IMR-90 (cell line): ENCODE measurements at regions of chr14 and their contacts with region 1.

Region 1: GRCh38 chr14:95774265-95775160 is 60.6 kb upstream of the TCL1A start:
- DNase-seq: peak; percentile 44
- ATAC-seq: peak; percentile 82
- H3K4me3 ChIP-seq: no peak overlapping the region
- H3K27ac ChIP-seq: no peak overlapping the region
- H3K4me1 ChIP-seq: no peaks in the 10 kb centered on the region
- H3K27me3 ChIP-seq: no peaks in the 10 kb centered on the region
- CTCF ChIP-seq: peak; percentile 76
- POLR2A ChIP-seq: no peak
- RAD21 ChIP-seq: peak; percentile 57

Region 2: GRCh38 chr14:94689218-94689984 is 1085.1 kb before region 1 on chr14:
- CTCF ChIA-PET with region 1: no interaction called
- POLR2A ChIA-PET with region 1: no interaction called
- dilution Hi-C with region 1: no loop called
- in situ Hi-C with region 1: no loop called
- intact Hi-C with region 1: loop called (anchors 10 kb)
- DNase-seq: peak; percentile 22
- ATAC-seq: peak; percentile 100
- H3K4me3 ChIP-seq: no peak overlapping the region; the same call in 1 of the 2 replicates
- H3K27ac ChIP-seq: no peak overlapping the region
- H3K4me1 ChIP-seq: peaks cover 2% of the 10 kb centered on the region; the same call in 1 of the 2 replicates
- H3K27me3 ChIP-seq: no peaks in the 10 kb centered on the region; the same call in 1 of the 2 replicates
- CTCF ChIP-seq: peak; percentile 92
- POLR2A ChIP-seq: no peak
- RAD21 ChIP-seq: peak; percentile 90

Region 3: GRCh38 chr14:95431199-95432143 is 343.0 kb before region 1 on chr14:
- CTCF ChIA-PET with region 1: interaction called, 5 read pairs
- POLR2A ChIA-PET with region 1: no interaction called
- dilution Hi-C with region 1: no loop called
- in situ Hi-C with region 1: loop called (anchors 25 kb)
- intact Hi-C with region 1: loop called (anchors 1 kb)
- DNase-seq: peak; percentile 17
- ATAC-seq: no peak
- H3K4me3 ChIP-seq: no peak overlapping the region
- H3K27ac ChIP-seq: no peak overlapping the region
- H3K4me1 ChIP-seq: no peaks in the 10 kb centered on the region
- H3K27me3 ChIP-seq: no peaks in the 10 kb centered on the region
- CTCF ChIP-seq: peak; percentile 51
- POLR2A ChIP-seq: no peak
- RAD21 ChIP-seq: peak; percentile 37; the same call in 1 of the 2 replicates

Region 4: GRCh38 chr14:95442633-95443021 is 331.9 kb before region 1 on chr14:
- CTCF ChIA-PET with region 1: no interaction called
- POLR2A ChIA-PET with region 1: no interaction called
- dilution Hi-C with region 1: no loop called
- in situ Hi-C with region 1: loop called (anchors 25 kb)
- intact Hi-C with region 1: loop called (anchors 1 kb)
- DNase-seq: peak; percentile 76
- ATAC-seq: peak; percentile 95
- H3K4me3 ChIP-seq: no peak overlapping the region
- H3K27ac ChIP-seq: no peak overlapping the region
- H3K4me1 ChIP-seq: peaks cover 5% of the 10 kb centered on the region
- H3K27me3 ChIP-seq: no peaks in the 10 kb centered on the region
- CTCF ChIP-seq: peak; percentile 83
- POLR2A ChIP-seq: no peak
- RAD21 ChIP-seq: peak; percentile 95

Region 5: DNA sequence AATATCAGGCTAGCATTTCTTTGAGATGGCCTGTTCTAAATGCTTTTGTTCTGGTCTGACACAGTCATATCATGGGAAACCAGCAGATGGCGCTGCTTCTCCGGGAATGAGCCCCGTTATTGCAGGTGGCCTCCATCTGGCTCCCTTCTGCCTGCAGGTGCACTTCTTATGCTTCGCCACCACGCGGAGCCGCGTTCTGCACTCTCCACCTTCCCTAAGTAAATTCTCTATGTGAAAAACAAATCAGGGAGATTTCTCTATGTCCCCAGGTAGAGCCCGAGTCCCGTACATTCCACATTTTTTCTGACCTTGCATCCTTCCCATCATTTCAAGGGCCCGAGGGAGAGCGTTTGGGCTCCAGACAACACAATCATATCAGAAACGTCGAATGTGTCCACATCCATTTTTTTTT is 213.5 kb before region 1 on chr14:
- CTCF ChIA-PET with region 1: interaction called, 8 read pairs
- POLR2A ChIA-PET with region 1: no interaction called
- dilution Hi-C with region 1: loop called (anchors 25 kb)
- in situ Hi-C with region 1: loop called (anchors 5 kb)
- intact Hi-C with region 1: no loop called
- DNase-seq: peak; percentile 82
- ATAC-seq: peak; percentile 88
- H3K4me3 ChIP-seq: no peak overlapping the region
- H3K27ac ChIP-seq: no peak overlapping the region
- H3K4me1 ChIP-seq: no peaks in the 10 kb centered on the region
- H3K27me3 ChIP-seq: peaks cover 7% of the 10 kb centered on the region
- CTCF ChIP-seq: peak; percentile 98
- POLR2A ChIP-seq: no peak
- RAD21 ChIP-seq: peak; percentile 96